CD8-positive, alpha-beta T cell (primary cell): ENCODE measurements at regions of chr4 and their contacts with region 1.

Region 1: GRCh38 chr4:98620087-98620784 is 38.2 kb downstream of the TSPAN5 start:
- DNase-seq: no peak
- ATAC-seq: no peak
- H3K4me3 ChIP-seq: no peak overlapping the region
- H3K4me3 Mint-ChIP-seq: peak overlapping the region; percentile 20
- H3K27ac ChIP-seq: no peak overlapping the region
- H3K27ac Mint-ChIP-seq: no peak overlapping the region
- H3K4me1 ChIP-seq: peaks cover 14% of the 10 kb centered on the region
- H3K4me1 Mint-ChIP-seq: peaks cover 52% of the 10 kb centered on the region
- H3K27me3 ChIP-seq: no peaks in the 10 kb centered on the region
- H3K27me3 Mint-ChIP-seq: no peaks in the 10 kb centered on the region
- CTCF ChIP-seq: no peak

Region 2: DNA sequence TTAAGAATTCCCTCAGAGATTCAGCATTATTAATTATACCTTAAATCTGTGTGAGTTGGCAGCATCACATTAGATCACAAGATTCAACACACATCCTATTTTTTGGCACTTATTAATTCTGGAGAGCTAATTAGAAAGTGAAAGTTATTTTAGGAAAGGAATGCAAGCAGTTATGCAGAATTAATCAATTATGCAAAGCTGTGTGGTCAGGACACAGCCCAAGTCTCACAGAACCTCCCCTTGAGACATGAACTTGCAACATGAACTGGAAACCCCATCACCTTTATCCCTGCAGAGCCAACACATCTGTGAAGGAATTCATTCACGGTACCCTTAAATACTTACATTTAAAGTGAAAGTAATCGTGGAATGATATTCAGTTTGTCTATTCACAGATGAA is 42.3 kb before region 1 on chr4:
- CTCF ChIA-PET with region 1: no interaction called
- POLR2A ChIA-PET with region 1: no interaction called
- intact Hi-C with region 1: loop called in 1 of 2 experiments (anchors 1 kb)
- DNase-seq: no peak
- ATAC-seq: no peak
- H3K4me3 ChIP-seq: no peak overlapping the region
- H3K4me3 Mint-ChIP-seq: no peak overlapping the region
- H3K27ac ChIP-seq: no peak overlapping the region
- H3K27ac Mint-ChIP-seq: no peak overlapping the region
- H3K4me1 ChIP-seq: no peaks in the 10 kb centered on the region
- H3K4me1 Mint-ChIP-seq: peaks cover 31% of the 10 kb centered on the region
- H3K27me3 ChIP-seq: no peaks in the 10 kb centered on the region
- H3K27me3 Mint-ChIP-seq: no peaks in the 10 kb centered on the region
- CTCF ChIP-seq: no peak

Region 3: GRCh38 chr4:98720871-98721480 is 100.7 kb after region 1 on chr4:
- CTCF ChIA-PET with region 1: no interaction called
- POLR2A ChIA-PET with region 1: no interaction called
- intact Hi-C with region 1: no loop called
- DNase-seq: no peak
- ATAC-seq: no peak
- H3K4me3 ChIP-seq: no peak overlapping the region
- H3K4me3 Mint-ChIP-seq: no peak overlapping the region
- H3K27ac ChIP-seq: no peak overlapping the region
- H3K27ac Mint-ChIP-seq: no peak overlapping the region
- H3K4me1 ChIP-seq: no peaks in the 10 kb centered on the region
- H3K4me1 Mint-ChIP-seq: no peaks in the 10 kb centered on the region
- H3K27me3 ChIP-seq: no peaks in the 10 kb centered on the region
- H3K27me3 Mint-ChIP-seq: no peaks in the 10 kb centered on the region
- CTCF ChIP-seq: no peak